Activated CD4-positive, alpha-beta memory T cell treated with anti-CD3 and anti-CD28 coated beads for 36 hours (primary cell): ENCODE measurements at regions of chr13 and their contacts with region 1.

Region 1: GRCh38 chr13:105202354-105202753 is 1333.1 kb downstream of the EFNB2 start:
- DNase-seq: no peak
- H3K4me3 Mint-ChIP-seq: no peak overlapping the region
- H3K27ac Mint-ChIP-seq: no peak overlapping the region
- H3K4me1 Mint-ChIP-seq: no peaks in the 10 kb centered on the region
- H3K27me3 Mint-ChIP-seq: peaks cover 18% of the 10 kb centered on the region

Region 2: DNA sequence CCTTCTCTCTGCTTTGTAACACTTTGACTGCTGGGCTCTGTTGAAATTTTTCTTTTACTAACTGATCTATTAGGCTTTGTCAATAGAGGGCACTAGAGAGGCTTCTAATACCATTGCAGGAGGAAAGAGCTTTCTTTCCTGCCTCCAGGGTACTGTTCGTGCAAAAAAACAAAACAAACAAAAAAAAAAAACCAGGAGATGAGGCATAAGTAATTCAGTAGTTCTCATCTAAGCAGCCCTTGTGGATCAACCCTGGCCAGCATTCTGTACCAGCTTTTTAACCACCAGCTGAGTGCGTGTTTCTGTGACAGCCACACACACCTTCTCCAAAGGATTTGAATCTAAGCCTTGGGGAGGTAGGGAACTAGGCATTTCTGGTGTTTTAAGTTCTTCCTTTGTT is 428.6 kb before region 1 on chr13:
- CTCF ChIA-PET with region 1: interaction called, 3 read pairs
- POLR2A ChIA-PET with region 1: no interaction called
- intact Hi-C with region 1: loop called (anchors 10 kb)
- DNase-seq: no peak
- H3K4me3 Mint-ChIP-seq: no peak overlapping the region
- H3K27ac Mint-ChIP-seq: no peak overlapping the region
- H3K4me1 Mint-ChIP-seq: no peaks in the 10 kb centered on the region
- H3K27me3 Mint-ChIP-seq: no peaks in the 10 kb centered on the region

Region 3: DNA sequence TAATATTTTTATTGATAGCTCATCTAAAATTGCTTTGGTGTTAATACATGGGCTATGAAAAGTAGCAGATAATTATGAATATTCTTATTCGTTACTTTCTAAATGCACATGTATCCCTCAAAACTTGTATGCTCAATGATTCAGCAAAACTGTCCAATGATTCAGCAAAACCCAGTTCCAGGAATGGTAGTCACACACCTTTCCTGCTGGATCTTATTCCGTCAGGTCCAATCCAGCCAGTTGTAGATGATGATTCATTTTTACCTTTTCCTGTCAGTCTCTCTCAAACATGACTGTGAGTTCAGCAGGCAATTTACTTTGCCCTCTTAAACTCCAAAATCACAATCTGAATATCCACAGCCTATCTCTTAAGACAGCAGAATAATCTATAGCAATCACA is 250.5 kb after region 1 on chr13:
- CTCF ChIA-PET with region 1: no interaction called
- POLR2A ChIA-PET with region 1: no interaction called
- intact Hi-C with region 1: no loop called
- DNase-seq: no peak
- H3K4me3 Mint-ChIP-seq: no peak overlapping the region
- H3K27ac Mint-ChIP-seq: no peak overlapping the region
- H3K4me1 Mint-ChIP-seq: no peaks in the 10 kb centered on the region
- H3K27me3 Mint-ChIP-seq: no peaks in the 10 kb centered on the region